GM10248 (cell line): ENCODE measurements at regions of chr17 and their contacts with region 1.

Region 1: GRCh38 chr17:76523084-76524037 is 14.1 kb downstream of the CYGB start:
- DNase-seq: peak; percentile 89
- CTCF ChIP-seq: peak; percentile 95

Region 2: GRCh38 chr17:76072148-76072858 is 451.1 kb before region 1 on chr17 and contains the start of gene SRP68:
- CTCF ChIA-PET with region 1: no interaction called
- POLR2A ChIA-PET with region 1: no interaction called
- DNase-seq: peak; percentile 95
- CTCF ChIP-seq: no peak

Region 3: DNA sequence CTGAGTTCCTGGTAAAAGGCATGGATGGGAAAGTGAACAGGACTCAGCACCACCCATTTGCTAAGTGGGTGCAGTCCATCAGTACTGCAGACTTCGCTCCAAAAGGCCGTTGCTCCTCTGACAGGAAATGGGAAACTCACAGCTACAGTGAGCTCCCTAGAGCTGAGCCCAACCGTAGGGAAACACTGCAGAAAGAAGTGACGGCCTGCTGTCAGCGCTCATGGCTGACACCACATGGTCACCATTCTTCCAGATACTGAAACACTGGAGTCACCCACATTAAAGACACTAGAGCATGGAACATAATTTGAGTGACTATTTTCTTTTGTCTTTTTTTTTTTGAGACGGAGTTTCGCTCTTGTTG is 102.3 kb before region 1 on chr17:
- CTCF ChIA-PET with region 1: no interaction called
- POLR2A ChIA-PET with region 1: no interaction called
- DNase-seq: no peak
- CTCF ChIP-seq: no peak

Region 4: DNA sequence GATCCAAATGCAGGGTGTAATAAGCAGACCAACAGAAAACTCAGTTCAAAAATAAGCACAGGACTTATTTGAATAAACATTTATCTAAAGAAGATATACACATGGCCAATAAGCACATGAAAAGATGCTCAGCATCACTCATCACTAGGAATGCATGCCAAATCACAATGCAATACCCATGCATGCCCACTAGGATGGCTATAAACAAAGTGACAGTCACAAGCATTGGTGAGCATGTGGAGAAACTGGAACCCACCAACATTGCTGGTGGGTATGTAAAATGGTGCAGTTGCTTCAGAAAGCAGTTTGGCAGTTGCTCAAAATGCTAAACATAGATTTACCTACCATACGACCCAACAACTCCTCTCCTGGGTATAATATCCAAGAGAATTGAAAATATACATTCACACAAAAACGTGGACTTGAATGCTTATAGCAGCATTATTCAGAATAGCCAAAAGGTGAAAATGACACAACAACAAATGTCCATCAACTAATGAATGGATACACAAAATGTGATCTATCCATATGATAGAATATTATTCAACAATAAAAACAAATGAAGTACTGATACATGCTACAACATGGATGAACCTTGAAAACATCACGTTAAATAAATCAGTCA is 90.5 kb before region 1 on chr17:
- CTCF ChIA-PET with region 1: no interaction called
- POLR2A ChIA-PET with region 1: no interaction called
- DNase-seq: no peak
- CTCF ChIP-seq: peak; percentile 12

Region 5: GRCh38 chr17:76446449-76447231 is 76.7 kb before region 1 on chr17:
- CTCF ChIA-PET with region 1: no interaction called
- POLR2A ChIA-PET with region 1: no interaction called
- DNase-seq: no peak
- CTCF ChIP-seq: no peak

Region 6: DNA sequence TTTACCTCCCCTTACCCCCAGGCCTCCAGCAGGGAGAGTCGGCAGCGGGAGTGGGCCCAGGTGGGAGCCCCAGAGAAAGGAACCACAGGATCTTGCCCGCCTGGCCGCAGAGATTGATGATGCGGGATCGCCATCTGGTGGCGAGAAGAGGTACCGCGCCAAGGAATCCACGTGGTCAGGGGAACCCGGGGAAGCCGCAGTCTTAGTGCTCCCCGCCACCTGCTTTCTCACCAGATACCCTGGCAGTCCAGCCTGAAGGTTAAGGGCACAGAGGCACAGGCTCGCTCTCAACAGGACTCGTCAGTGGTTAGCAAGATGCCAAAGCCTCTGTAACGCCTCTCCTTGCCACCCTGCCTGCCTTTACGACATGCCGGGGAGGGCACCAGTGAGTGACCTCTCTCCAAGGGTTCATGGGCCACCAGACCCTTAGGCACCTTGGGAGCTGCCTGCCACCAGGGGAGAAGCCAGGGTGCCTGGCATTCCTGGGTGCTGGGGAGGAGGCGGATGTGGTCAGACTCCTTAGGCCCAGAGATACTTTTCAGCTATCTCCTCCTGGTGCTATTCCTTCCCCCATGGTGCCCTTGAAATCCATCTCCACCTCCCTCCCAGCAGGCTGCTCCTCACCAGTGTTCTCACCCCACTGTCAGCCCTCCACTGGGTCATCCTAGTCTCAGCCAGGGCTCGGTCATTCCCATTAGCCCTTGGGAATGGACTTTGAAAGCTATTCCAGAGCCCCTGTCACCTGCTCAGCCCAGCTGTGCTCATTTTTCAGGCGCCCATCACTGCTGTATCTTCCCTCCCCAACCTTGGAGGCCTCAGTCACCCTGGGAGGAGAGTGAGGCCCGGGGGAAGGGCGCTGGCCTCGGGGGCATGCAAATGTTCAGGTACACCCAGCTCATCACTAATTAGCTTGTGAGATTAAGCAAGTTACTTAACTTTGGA is 16.7 kb before region 1 on chr17:
- CTCF ChIA-PET with region 1: interaction called, 28 read pairs
- POLR2A ChIA-PET with region 1: no interaction called
- DNase-seq: peak; percentile 88
- CTCF ChIP-seq: peak; percentile 89

Region 7: DNA sequence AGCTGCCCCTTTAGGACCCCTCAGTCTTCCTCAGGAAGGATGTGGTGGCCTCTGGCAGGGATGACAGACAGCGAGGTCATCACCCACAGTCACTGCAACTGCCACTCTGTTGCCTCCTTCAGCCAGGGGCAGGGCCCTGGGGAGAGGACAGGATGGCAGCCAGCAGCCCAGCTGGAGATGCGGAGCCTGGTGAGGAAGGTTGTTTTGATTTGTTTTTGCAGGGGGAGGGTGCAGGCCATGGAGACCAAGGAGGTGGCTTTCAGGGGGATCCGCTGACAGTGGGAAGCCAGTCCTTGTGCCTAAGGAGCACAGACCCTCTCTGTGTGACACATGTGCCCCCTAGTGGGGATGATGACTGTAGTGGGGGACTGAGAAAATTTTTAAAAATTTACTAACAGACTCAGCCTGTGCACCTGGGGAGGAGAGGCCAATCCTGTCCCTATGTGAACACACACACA is 23.9 kb after region 1 on chr17:
- CTCF ChIA-PET with region 1: interaction called, 53 read pairs
- POLR2A ChIA-PET with region 1: no interaction called
- DNase-seq: peak; percentile 72
- CTCF ChIP-seq: peak; percentile 55

Region 8: DNA sequence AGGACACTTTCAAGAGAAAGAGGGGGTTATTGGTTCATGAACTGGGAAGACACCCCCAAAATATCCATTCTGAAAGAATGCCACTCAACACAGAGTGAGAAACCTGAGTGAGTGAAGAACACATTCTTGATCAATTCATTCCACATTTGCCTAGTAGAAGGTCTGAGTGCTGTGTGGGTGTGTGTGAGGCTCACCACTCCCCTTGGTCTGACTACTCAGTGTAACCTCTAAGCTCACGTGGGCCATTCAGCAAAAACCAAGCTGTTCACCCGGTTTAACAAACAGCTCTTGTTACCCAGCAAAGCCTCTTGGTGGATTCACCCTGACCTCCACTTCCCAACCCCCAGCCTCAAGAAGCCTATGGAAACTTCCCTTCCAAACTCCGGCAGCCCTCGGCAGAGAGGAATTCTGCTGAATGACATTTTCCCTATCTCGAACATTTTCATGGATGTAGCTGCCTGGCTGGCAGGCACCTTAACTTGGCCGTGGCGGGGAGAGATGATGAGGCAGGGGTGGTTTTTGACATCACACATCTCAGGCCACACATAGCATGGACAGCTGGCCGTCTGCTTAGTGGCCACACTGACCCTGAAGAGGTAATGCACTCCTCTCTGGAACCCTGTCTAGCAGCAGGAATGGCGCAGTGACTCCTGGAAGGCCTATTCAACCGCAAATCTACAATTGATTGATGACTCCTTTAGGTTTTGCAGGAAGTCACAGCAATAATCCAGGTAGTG is 108.6 kb after region 1 on chr17:
- CTCF ChIA-PET with region 1: interaction called, 109 read pairs
- POLR2A ChIA-PET with region 1: no interaction called
- DNase-seq: no peak
- CTCF ChIP-seq: no peak

Region 9: GRCh38 chr17:76714822-76715495 is 191.6 kb after region 1 on chr17:
- CTCF ChIA-PET with region 1: interaction called, 13 read pairs
- POLR2A ChIA-PET with region 1: no interaction called
- DNase-seq: peak; percentile 64
- CTCF ChIP-seq: peak; percentile 76